GM12878 (cell line): ENCODE measurements at regions of chr9 and their contacts with region 1.

Region 1: DNA sequence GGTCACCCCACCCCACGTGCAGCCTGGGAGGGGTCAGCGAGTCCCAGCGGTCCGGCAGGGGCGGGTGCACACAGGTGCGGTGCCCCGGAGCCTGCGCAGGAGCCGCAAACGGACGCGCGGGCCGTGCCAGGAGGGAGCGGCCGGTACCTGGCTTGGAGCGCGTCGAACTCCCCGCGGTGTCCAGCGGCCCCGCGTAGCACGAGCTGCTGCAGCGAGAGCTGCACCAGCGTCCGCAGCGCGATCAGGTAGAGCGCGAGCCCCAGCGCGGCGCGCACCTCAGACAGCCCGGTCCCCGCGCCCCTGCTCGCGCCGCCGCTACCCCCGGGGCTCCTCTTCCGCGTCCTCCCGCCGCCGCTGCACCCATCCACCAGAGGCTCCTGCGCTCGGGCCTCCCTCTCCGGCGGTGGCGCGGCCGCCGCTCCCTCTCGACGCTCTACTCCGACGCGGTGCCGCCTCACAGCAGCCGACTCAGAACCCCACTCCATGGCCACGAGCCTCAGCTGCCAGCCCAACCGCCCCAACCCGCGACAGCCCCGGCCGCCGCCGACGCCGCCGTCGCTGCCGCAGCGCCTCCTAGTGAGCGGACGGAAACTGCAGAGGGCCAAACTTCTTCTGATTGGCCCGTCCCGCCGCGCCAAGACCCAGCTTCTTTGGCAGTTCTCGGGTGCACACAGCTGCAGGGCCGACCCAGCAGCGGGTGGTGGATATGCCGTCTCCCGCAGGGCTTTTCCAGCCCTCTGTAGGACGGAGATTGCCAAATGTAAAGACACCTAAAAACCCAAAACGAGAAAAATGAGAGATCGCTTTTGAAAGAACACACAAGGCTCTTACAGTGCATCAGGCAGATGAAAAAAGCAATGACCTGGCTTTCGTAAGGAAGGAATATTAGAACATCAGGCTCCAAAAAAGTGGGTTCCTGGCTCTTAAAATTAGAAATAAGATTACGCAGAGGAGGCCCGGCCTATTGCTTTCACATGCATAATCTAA is at the start of gene ERMP1:
- DNase-seq: no peak
- ATAC-seq: peak; percentile 85
- H3K4me3 ChIP-seq: peak within 1 kb of the TSS; percentile 97
- H3K27ac ChIP-seq: peak within 1 kb of the TSS; percentile 70
- H3K4me1 ChIP-seq: peaks cover 5% of the 10 kb centered on the region; the same call in 1 of the 2 replicates
- H3K27me3 ChIP-seq: no peaks in the 10 kb centered on the region
- CTCF ChIP-seq: peak; percentile 85 to 97 (median 89); a peak in 5 of 6 replicates
- EP300 ChIP-seq: no peak
- POLR2A ChIP-seq: peak; percentile 91
- RAD21 ChIP-seq: peak; percentile 62
- polyA plus RNA-seq, gene ERMP1: 2.4 to 2.7 TPM

Region 2: GRCh38 chr9:5628530-5629311 is 204.1 kb before region 1 on chr9 and contains the start of gene RIC1:
- CTCF ChIA-PET with region 1: no interaction called
- POLR2A ChIA-PET with region 1: interaction called, 10 read pairs
- RAD21 ChIA-PET with region 1: interaction called, 13 read pairs
- SMC1A ChIA-PET with region 1: interaction called, 9 read pairs
- in situ Hi-C with region 1: no loop called
- intact Hi-C with region 1: loop called (anchors 5 kb)
- DNase-seq: peak; percentile 67
- ATAC-seq: peak; percentile 69
- H3K4me3 ChIP-seq: peak within 1 kb of the TSS; percentile 98
- H3K27ac ChIP-seq: peak within 1 kb of the TSS; percentile 78
- H3K4me1 ChIP-seq: peaks cover 33% of the 10 kb centered on the region
- H3K27me3 ChIP-seq: no peaks in the 10 kb centered on the region
- CTCF ChIP-seq: no peak
- EP300 ChIP-seq: 0 out of 4 replicates have a peak, but pooled peaks of 1 of the 2 experiments have one; percentile 9
- POLR2A ChIP-seq: peak; percentile 84
- RAD21 ChIP-seq: no peak
- polyA plus RNA-seq, gene RIC1: 6.2 to 7.1 TPM

Region 3: DNA sequence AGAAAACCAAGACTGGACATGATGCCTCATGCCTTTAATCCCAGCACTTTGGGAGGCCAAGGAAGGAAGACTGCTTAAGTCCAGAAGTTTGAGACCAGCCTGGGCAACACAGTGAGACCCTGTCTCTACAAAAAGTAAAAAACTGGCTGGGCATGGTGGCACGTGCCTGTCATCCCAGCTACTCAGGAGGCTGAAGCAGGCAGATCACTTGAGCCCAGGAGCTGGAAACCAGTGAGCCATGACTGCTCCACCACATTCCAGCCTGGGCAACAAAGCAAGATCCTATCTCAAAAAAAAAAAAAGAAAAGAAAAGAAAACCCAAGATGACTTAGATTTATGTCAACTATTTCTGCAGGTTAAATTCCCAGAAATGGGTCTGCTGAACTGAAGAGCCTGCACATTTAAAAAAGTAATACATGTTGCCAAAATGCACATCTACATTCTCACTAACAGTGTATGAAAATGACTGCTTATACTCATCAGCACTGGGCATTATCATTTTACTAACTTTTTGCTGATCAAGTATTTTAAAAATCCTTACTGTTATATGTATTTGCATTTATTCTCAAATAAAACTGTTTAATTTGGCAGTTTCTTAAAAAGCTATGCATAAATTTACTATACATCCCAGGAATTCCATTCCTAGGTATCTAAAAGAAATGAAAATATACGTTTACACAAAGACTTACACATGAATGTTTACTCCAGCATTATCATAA is 14.3 kb before region 1 on chr9:
- CTCF ChIA-PET with region 1: interaction called, 23 read pairs
- POLR2A ChIA-PET with region 1: interaction called, 17 read pairs
- RAD21 ChIA-PET with region 1: interaction called, 4 read pairs
- SMC1A ChIA-PET with region 1: interaction called, 41 read pairs
- in situ Hi-C with region 1: no loop called
- intact Hi-C with region 1: no loop called
- DNase-seq: no peak
- ATAC-seq: no peak
- H3K4me3 ChIP-seq: no peak overlapping the region
- H3K27ac ChIP-seq: no peak overlapping the region
- H3K4me1 ChIP-seq: no peaks in the 10 kb centered on the region
- H3K27me3 ChIP-seq: no peaks in the 10 kb centered on the region
- CTCF ChIP-seq: no peak
- EP300 ChIP-seq: no peak
- POLR2A ChIP-seq: no peak
- RAD21 ChIP-seq: no peak

Region 4: GRCh38 chr9:5843794-5844504 is 11.1 kb after region 1 on chr9:
- CTCF ChIA-PET with region 1: interaction called, 53 read pairs
- POLR2A ChIA-PET with region 1: interaction called, 142 read pairs
- RAD21 ChIA-PET with region 1: interaction called, 42 read pairs
- SMC1A ChIA-PET with region 1: interaction called, 75 read pairs
- in situ Hi-C with region 1: no loop called
- intact Hi-C with region 1: no loop called
- DNase-seq: no peak
- ATAC-seq: peak; percentile 31
- H3K4me3 ChIP-seq: no peak overlapping the region
- H3K27ac ChIP-seq: peak overlapping the region; percentile 38; the same call in 1 of the 2 replicates
- H3K4me1 ChIP-seq: peaks cover 43% of the 10 kb centered on the region
- H3K27me3 ChIP-seq: no peaks in the 10 kb centered on the region
- CTCF ChIP-seq: no peak
- EP300 ChIP-seq: no peak
- POLR2A ChIP-seq: no peak
- RAD21 ChIP-seq: no peak

Region 5: GRCh38 chr9:5851445-5851844 is 18.6 kb after region 1 on chr9:
- CTCF ChIA-PET with region 1: interaction called, 36 read pairs
- POLR2A ChIA-PET with region 1: interaction called, 142 read pairs
- RAD21 ChIA-PET with region 1: interaction called, 59 read pairs
- SMC1A ChIA-PET with region 1: interaction called, 58 read pairs
- in situ Hi-C with region 1: no loop called
- intact Hi-C with region 1: no loop called
- DNase-seq: peak; percentile 90
- ATAC-seq: peak; percentile 96
- H3K4me3 ChIP-seq: no peak overlapping the region
- H3K27ac ChIP-seq: peak overlapping the region; percentile 54; the same call in 1 of the 2 replicates
- H3K4me1 ChIP-seq: peaks cover 37% of the 10 kb centered on the region
- H3K27me3 ChIP-seq: no peaks in the 10 kb centered on the region
- CTCF ChIP-seq: peak in 1 of 3 experiments; percentile 11; a peak in 1 of 6 replicates
- EP300 ChIP-seq: peak; percentile 34 to 82; a peak in 2 of 4 replicates
- POLR2A ChIP-seq: no peak
- RAD21 ChIP-seq: no peak

Region 6: GRCh38 chr9:5869315-5870019 is 36.6 kb after region 1 on chr9:
- CTCF ChIA-PET with region 1: interaction called, 3 read pairs
- POLR2A ChIA-PET with region 1: interaction called, 3 read pairs
- RAD21 ChIA-PET with region 1: interaction called, 3 read pairs
- SMC1A ChIA-PET with region 1: interaction called, 12 read pairs
- in situ Hi-C with region 1: no loop called
- intact Hi-C with region 1: no loop called
- DNase-seq: no peak
- ATAC-seq: peak; percentile 69
- H3K4me3 ChIP-seq: no peak overlapping the region
- H3K27ac ChIP-seq: no peak overlapping the region
- H3K4me1 ChIP-seq: no peaks in the 10 kb centered on the region
- H3K27me3 ChIP-seq: no peaks in the 10 kb centered on the region
- CTCF ChIP-seq: peak in 2 of 3 experiments; percentile 57 to 65; a peak in 5 of 6 replicates
- EP300 ChIP-seq: no peak
- POLR2A ChIP-seq: no peak
- RAD21 ChIP-seq: peak; percentile 48

Region 7: GRCh38 chr9:5879419-5880181 is 46.8 kb after region 1 on chr9:
- CTCF ChIA-PET with region 1: interaction called, 37 read pairs
- POLR2A ChIA-PET with region 1: interaction called, 4 read pairs
- RAD21 ChIA-PET with region 1: interaction called, 12 read pairs
- SMC1A ChIA-PET with region 1: interaction called, 9 read pairs
- in situ Hi-C with region 1: no loop called
- intact Hi-C with region 1: loop called (anchors 2 kb)
- DNase-seq: no peak
- ATAC-seq: no peak
- H3K4me3 ChIP-seq: no peak overlapping the region
- H3K27ac ChIP-seq: no peak overlapping the region
- H3K4me1 ChIP-seq: peaks cover 5% of the 10 kb centered on the region; the same call in 1 of the 2 replicates
- H3K27me3 ChIP-seq: no peaks in the 10 kb centered on the region
- CTCF ChIP-seq: no peak
- EP300 ChIP-seq: no peak
- POLR2A ChIP-seq: no peak
- RAD21 ChIP-seq: no peak

Region 8: GRCh38 chr9:6045364-6045763 is 212.5 kb after region 1 on chr9:
- CTCF ChIA-PET with region 1: no interaction called
- POLR2A ChIA-PET with region 1: no interaction called
- RAD21 ChIA-PET with region 1: no interaction called
- SMC1A ChIA-PET with region 1: no interaction called
- in situ Hi-C with region 1: no loop called
- intact Hi-C with region 1: no loop called
- DNase-seq: no peak
- ATAC-seq: no peak
- H3K4me3 ChIP-seq: no peak overlapping the region
- H3K27ac ChIP-seq: no peak overlapping the region
- H3K4me1 ChIP-seq: peaks cover 5% of the 10 kb centered on the region; the same call in 1 of the 2 replicates
- H3K27me3 ChIP-seq: no peaks in the 10 kb centered on the region
- CTCF ChIP-seq: no peak
- EP300 ChIP-seq: no peak
- POLR2A ChIP-seq: no peak
- RAD21 ChIP-seq: no peak

Region 9: DNA sequence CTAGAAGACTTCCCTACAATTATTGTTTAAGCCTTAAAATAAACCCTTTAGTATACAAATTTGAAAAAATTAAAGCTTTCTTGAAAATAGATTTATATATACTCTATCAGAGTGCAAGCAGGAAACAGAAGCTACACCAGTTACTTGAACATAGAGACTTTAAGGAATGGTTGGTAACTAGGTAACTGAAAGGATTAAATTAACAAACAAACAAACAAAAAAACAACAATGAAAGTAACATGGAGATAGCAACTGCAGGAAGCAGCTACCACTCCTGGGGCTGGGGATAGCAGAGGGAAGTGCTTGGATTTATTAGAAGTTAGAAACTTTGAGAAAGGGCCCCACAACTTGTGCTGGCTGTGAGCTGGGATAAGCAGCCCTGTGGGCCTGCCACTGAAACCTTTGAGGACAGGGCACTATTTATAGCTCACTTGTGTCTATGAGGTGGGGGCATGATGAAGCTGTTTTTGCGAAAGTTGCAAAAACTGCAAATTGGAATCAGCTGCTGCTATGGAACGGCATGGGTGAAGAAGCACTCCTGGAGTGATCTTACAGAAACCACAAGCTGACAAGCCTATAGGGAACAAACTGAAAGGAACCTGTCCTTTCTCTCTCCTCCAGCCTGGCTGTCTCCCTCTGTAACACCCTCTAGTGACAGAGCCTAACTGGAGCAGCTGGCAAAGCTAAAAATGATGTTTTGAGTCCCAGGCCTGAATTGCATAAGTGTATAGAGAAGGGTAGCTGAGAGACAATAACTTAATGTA is 273.9 kb after region 1 on chr9:
- CTCF ChIA-PET with region 1: no interaction called
- POLR2A ChIA-PET with region 1: no interaction called
- RAD21 ChIA-PET with region 1: no interaction called
- SMC1A ChIA-PET with region 1: no interaction called
- in situ Hi-C with region 1: no loop called
- intact Hi-C with region 1: no loop called
- DNase-seq: peak; percentile 41
- ATAC-seq: peak; percentile 92
- H3K4me3 ChIP-seq: no peak overlapping the region
- H3K27ac ChIP-seq: no peak overlapping the region
- H3K4me1 ChIP-seq: no peaks in the 10 kb centered on the region
- H3K27me3 ChIP-seq: no peaks in the 10 kb centered on the region
- CTCF ChIP-seq: peak; percentile 21 to 38 (median 26); a peak in 3 of 6 replicates
- EP300 ChIP-seq: no peak
- POLR2A ChIP-seq: no peak
- RAD21 ChIP-seq: peak; percentile 41